ENCODE measurements at regions of chr1 and their contacts with region 1.

Region 1: GRCh38 chr1:200279810-200280411 is 129.9 kb downstream of the ZNF281 start:
- DNase-seq: no peak
- H3K4me3 ChIP-seq: no peak overlapping the region
- CTCF ChIP-seq: peak; percentile 59

Region 2: DNA sequence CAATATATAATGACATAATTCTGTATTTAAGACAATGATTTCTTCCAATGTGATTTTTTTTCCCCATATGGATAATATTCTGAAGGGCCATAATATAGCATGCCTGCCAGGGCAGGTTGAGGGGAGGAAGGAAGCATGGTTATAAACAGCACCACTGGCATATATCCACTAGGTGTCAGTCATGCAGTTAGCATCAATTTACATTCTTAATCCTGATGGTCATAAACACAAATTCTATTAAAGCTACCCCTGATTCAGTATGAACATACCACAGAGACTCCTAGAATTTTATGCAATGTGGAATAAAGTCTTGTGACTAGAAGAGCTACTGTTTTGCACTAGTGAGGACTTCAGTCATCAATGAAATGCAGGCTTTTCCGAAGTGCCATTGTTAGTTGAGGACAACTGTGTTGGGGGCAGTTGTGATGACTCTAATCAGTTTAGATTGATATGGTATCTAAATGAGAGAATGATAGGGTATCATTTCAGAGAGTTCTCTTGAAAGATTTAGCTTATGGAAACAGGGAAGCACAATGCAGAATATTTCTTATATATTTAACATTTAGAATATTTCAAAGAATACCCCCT is 595.1 kb before region 1 on chr1:
- CTCF ChIA-PET with region 1: interaction called, 17 read pairs
- POLR2A ChIA-PET with region 1: no interaction called
- DNase-seq: no peak
- H3K4me3 ChIP-seq: no peak overlapping the region
- CTCF ChIP-seq: peak; percentile 72

Region 3: GRCh38 chr1:200258447-200259375 is 21.2 kb before region 1 on chr1:
- CTCF ChIA-PET with region 1: interaction called, 41 read pairs
- POLR2A ChIA-PET with region 1: no interaction called
- DNase-seq: no peak
- H3K4me3 ChIP-seq: no peak overlapping the region
- CTCF ChIP-seq: peak; percentile 40

Region 4: GRCh38 chr1:200302192-200302920 is 22.4 kb after region 1 on chr1:
- CTCF ChIA-PET with region 1: interaction called, 10 read pairs
- POLR2A ChIA-PET with region 1: no interaction called
- DNase-seq: no peak
- H3K4me3 ChIP-seq: peak overlapping the region; percentile 65
- CTCF ChIP-seq: no peak

Region 5: GRCh38 chr1:200510228-200510623 is 230.3 kb after region 1 on chr1:
- CTCF ChIA-PET with region 1: interaction called, 38 read pairs
- POLR2A ChIA-PET with region 1: no interaction called
- DNase-seq: peak; percentile 41
- H3K4me3 ChIP-seq: no peak overlapping the region
- CTCF ChIP-seq: peak; percentile 73